Cardiac septum (tissue), 1 donor: ENCODE measurements at regions of chr11 and their contacts with region 1.

Region 1: GRCh38 chr11:69443138-69443967 is 38.1 kb upstream of the LINC01488 start:
- DNase-seq: peak; percentile 97

Region 2: DNA sequence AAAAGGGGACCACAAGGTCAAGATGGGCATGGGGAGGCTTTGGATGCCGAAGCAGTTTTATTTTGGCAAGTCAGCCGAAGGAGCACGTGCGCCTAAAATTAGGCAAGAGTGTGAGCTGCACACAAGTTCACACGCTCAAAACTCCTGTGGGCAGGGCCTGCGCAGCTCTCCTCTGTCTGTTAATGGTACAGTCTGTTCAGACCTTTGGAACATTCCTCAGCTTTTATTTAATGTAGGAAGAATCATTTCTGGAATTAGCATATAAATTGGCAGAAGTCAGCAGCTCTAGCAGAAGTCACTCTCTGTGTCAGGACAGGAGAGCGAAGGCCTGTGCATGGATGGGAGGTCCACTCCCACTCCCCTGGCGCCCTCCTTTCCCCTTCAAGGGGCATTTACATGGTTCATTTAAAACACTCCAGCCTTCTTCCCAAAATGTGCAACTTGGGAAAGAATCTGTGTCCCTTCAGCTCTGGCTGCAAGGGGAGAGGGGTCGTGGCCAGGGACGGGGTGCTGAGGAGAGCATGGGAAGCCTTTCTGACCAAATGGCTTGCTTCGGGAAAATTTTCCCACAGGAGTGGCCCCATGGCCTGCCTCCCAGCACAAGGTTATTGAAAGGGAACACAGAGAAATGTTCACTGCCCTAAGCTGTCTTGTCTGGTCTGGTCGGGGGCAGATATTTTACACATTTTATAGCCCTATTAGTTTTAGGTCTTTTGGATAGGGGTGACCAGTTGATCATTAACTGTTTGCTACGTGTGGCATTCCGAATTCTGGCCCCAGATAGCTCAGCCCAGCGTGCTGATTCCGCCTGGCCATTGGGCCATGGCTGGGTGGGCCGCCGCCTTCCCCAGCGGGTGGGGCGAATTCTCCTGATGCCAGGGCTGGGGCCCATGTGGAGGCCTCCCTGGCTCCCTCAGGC is 331.5 kb before region 1 on chr11:
- intact Hi-C with region 1: no loop called
- DNase-seq: no peak

Region 3: GRCh38 chr11:69122642-69123431 is 320.5 kb before region 1 on chr11:
- intact Hi-C with region 1: loop called (anchors 10 kb)
- DNase-seq: no peak

Region 4: DNA sequence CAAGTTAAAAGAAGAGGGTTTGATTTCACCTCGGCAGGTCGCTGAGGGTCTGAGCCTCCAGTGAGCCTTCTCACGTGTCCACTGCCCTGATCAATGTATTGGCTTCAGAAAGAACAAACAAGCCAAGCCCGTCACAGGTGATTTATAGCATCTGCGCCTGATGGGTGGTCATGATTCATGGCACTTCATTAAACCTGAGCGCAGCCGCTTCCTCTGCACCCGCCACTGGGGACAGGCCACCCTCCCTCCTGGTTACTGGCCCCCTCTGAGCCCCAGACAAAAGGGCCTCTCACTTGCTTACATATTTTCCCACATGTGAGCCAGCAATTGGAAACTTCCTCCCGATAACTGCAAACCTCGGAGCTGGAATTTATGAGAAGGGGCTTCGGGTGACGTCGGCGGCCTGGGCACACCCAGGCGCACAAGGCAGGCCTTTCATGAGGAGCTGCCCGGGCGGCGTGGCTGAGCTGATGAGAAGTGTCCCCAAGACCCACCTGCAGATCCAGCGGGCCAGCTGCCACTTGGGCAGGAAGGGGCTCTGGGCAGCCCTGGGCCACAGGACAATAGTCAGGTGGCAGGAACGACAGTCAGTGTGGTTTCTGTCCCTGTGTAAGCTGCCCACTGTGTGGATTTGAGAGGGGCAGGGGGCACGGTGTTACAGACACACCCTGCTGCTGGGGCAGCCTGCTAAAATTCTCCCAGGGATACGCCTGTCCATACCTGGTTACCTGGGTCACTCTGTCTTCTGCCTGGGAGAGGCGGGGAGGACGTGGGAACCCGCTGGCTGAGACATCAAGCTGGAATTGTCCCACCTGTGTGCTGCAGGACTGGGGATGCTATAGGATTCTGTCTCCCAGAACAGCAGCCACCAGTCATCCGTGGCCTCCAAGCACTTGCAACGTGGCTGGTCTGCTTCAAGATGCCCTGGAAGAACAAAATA is 25.9 kb before region 1 on chr11:
- intact Hi-C with region 1: loop called (anchors 2 kb)
- DNase-seq: no peak

Region 5: DNA sequence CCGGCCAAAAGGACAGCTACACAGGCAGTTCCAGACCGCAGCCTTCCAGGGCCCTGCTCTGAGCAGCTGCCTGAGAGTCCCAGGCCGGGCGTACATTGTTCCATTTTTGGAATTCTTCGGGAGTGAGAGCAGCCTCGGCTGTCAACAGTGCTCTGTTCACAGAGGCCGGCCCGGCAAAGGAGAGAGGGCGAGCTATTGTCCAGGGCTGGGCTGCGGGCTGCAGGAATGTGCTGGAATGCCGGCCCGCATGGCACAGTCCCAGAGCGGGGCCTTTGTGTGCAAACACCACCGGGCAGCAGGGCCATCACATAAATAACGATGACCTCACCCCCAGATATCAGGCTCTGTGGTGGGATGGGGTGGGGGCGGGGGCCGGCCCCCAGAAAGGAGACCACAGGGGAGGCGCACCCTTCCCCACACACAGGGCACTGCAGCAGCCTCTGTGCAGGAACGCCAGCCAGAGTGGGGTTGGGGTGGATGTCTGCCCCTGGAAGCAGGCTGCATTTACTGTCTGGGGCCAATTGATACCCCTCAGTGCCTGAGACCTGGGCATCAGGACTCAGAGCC is 54.0 kb after region 1 on chr11:
- intact Hi-C with region 1: loop called (anchors 2 kb)
- DNase-seq: peak; percentile 90

Region 6: DNA sequence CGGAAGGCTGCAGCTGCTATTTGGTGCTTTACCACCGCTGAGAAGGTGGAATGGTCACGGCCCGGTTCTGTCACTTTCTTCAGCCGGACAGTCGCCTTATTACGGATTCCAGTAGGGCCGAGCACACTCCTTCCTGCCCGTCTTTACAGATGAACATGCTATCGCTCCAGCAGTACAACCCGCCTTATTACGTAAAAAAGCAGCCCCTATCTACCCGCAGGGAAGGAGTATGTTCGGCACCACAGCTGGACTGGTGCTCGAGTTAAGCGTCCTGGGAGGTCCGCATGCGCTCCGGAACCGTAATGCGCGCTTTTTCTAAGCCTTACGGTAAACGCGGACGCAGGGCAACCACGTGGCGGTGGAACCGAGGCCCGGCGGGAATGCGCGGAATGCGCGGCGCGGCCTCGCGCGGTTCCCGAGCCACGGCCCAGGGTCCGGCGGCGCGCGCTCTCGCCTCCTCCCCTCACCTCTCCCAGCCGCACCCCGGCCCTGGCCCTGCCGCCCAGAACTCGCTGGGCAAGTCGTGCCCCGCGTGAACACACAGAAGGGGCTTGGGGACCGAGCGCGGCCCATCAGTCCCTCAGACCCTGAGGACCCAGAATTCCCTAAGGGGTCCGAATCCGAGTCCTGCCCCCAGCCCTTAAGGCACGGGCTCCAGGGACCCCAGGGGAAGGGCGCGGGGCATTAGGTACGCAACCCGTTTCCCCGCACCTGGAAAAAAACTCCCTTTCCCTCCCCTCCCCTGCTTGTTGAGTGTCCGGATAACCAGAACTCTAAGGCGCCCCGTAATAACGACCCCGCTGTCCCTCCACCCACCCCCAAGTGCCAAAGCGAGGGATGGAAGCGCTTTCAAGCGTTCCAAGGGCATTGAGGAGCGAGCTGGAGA is 193.2 kb after region 1 on chr11:
- intact Hi-C with region 1: loop called (anchors 1 kb)
- DNase-seq: peak; percentile 86